ENCODE measurements at regions of chr6 and their contacts with region 1.

Region 1: GRCh38 chr6:156197513-156197912 is 579.7 kb upstream of the ARID1B start:
- DNase-seq: no peak
- ATAC-seq: peak; percentile 73
- H3K4me3 Mint-ChIP-seq: no peak overlapping the region
- H3K27ac Mint-ChIP-seq: peak overlapping the region; percentile 82
- H3K4me1 Mint-ChIP-seq: peaks cover 38% of the 10 kb centered on the region
- H3K27me3 Mint-ChIP-seq: no peaks in the 10 kb centered on the region

Region 2: GRCh38 chr6:156167625-156168071 is 29.9 kb before region 1 on chr6:
- CTCF ChIA-PET with region 1: no interaction called
- POLR2A ChIA-PET with region 1: no interaction called
- intact Hi-C with region 1: loop called in 1 of 2 experiments (anchors 5 kb)
- DNase-seq: no peak
- ATAC-seq: peak; percentile 47
- H3K4me3 Mint-ChIP-seq: peak overlapping the region; percentile 60
- H3K27ac Mint-ChIP-seq: peak overlapping the region; percentile 88
- H3K4me1 Mint-ChIP-seq: peaks cover 57% of the 10 kb centered on the region
- H3K27me3 Mint-ChIP-seq: no peaks in the 10 kb centered on the region

Measured in activated CD4-positive, alpha-beta T cell treated with anti-CD3 and anti-CD28 coated beads for 36 hours (primary cell).